Heart left ventricle (tissue), 16 donors: ENCODE measurements at regions of chr18 and their contacts with region 1.

Region 1: GRCh38 chr18:21509062-21509461 is 91.4 kb downstream of the ESCO1 start:
- DNase-seq: no peak
- ATAC-seq: no peak
- H3K4me3 ChIP-seq: no peak overlapping the region
- H3K27ac ChIP-seq: no peak overlapping the region
- H3K4me1 ChIP-seq: no peaks in the 10 kb centered on the region
- H3K27me3 ChIP-seq: no peaks in the 10 kb centered on the region
- CTCF ChIP-seq: no peak
- POLR2A ChIP-seq: no peak

Region 2: GRCh38 chr18:21289827-21290226 is 219.2 kb before region 1 on chr18:
- intact Hi-C with region 1: no loop called
- DNase-seq: no peak
- ATAC-seq: no peak
- H3K4me3 ChIP-seq: no peak overlapping the region
- H3K27ac ChIP-seq: no peak overlapping the region
- H3K4me1 ChIP-seq: no peaks in the 10 kb centered on the region
- H3K27me3 ChIP-seq: peaks cover 0 to 6% (median 0%) of the 10 kb centered on the region in 9 donors
- CTCF ChIP-seq: no peak
- POLR2A ChIP-seq: no peak

Region 3: GRCh38 chr18:21406111-21406510 is 103.0 kb before region 1 on chr18:
- intact Hi-C with region 1: loop called in 1 of 10 experiments (anchors 10 kb)
- DNase-seq: no peak
- ATAC-seq: no peak
- H3K4me3 ChIP-seq: no peak overlapping the region
- H3K27ac ChIP-seq: no peak overlapping the region
- H3K4me1 ChIP-seq: no peaks in the 10 kb centered on the region
- H3K27me3 ChIP-seq: no peaks in the 10 kb centered on the region
- CTCF ChIP-seq: no peak
- POLR2A ChIP-seq: no peak

Region 4: DNA sequence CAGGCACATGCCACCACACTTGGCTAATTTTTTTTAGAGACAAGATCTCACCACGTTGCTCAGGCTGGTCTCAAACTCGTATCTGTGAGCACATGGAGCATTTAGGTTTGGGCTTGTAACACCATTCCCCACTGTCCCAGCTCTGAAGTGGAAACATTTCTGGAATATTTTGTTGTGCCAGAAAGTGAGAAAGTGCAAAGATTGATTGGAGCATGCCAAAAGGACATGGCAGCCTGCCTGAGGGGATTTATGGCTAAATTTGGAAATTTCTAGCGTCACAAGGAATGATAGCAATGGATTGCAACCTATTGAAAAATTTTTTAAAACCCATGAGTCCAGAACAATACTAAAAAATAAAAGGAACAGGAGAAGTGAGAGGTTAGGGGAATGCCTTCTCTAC is 45.3 kb before region 1 on chr18:
- intact Hi-C with region 1: no loop called
- DNase-seq: no peak
- ATAC-seq: no peak
- H3K4me3 ChIP-seq: no peak overlapping the region
- H3K27ac ChIP-seq: peak overlapping the region in 2 of 12 donors; percentile 4 to 13
- H3K4me1 ChIP-seq: peaks cover 0 to 17% (median 1%) of the 10 kb centered on the region in 12 donors
- H3K27me3 ChIP-seq: no peaks in the 10 kb centered on the region
- CTCF ChIP-seq: no peak
- POLR2A ChIP-seq: no peak